ENCODE measurements at regions of chr14 and their contacts with region 1.

Region 1: GRCh38 chr14:82009076-82009475 is 475.4 kb upstream of the SEL1L start:
- DNase-seq: no peak
- ATAC-seq: peak; percentile 59
- H3K4me3 ChIP-seq: no peak overlapping the region
- H3K27ac ChIP-seq: no peak overlapping the region
- H3K4me1 ChIP-seq: no peaks in the 10 kb centered on the region
- H3K27me3 ChIP-seq: no peaks in the 10 kb centered on the region
- CTCF ChIP-seq: peak; percentile 17 to 25 (median 19); a peak in 2 of 6 replicates
- EP300 ChIP-seq: no peak
- POLR2A ChIP-seq: no peak
- RAD21 ChIP-seq: peak; percentile 37; the same call in 1 of the 2 replicates

Region 2: GRCh38 chr14:82055515-82056115 is 46.5 kb after region 1 on chr14:
- CTCF ChIA-PET with region 1: interaction called, 13 read pairs
- POLR2A ChIA-PET with region 1: no interaction called
- RAD21 ChIA-PET with region 1: interaction called, 11 read pairs
- SMC1A ChIA-PET with region 1: interaction called, 4 read pairs
- in situ Hi-C with region 1: no loop called
- intact Hi-C with region 1: no loop called
- DNase-seq: no peak
- ATAC-seq: peak; percentile 79
- H3K4me3 ChIP-seq: no peak overlapping the region
- H3K27ac ChIP-seq: no peak overlapping the region
- H3K4me1 ChIP-seq: no peaks in the 10 kb centered on the region
- H3K27me3 ChIP-seq: no peaks in the 10 kb centered on the region
- CTCF ChIP-seq: no peak
- EP300 ChIP-seq: no peak
- POLR2A ChIP-seq: no peak
- RAD21 ChIP-seq: no peak

Region 3: GRCh38 chr14:82104013-82104412 is 94.9 kb after region 1 on chr14:
- CTCF ChIA-PET with region 1: no interaction called
- POLR2A ChIA-PET with region 1: no interaction called
- RAD21 ChIA-PET with region 1: no interaction called
- SMC1A ChIA-PET with region 1: no interaction called
- in situ Hi-C with region 1: no loop called
- intact Hi-C with region 1: no loop called
- DNase-seq: no peak
- ATAC-seq: no peak
- H3K4me3 ChIP-seq: no peak overlapping the region
- H3K27ac ChIP-seq: no peak overlapping the region
- H3K4me1 ChIP-seq: no peaks in the 10 kb centered on the region
- H3K27me3 ChIP-seq: no peaks in the 10 kb centered on the region
- CTCF ChIP-seq: no peak
- EP300 ChIP-seq: no peak
- POLR2A ChIP-seq: no peak
- RAD21 ChIP-seq: no peak